Activated CD4-positive, alpha-beta memory T cell treated with anti-CD3 and anti-CD28 coated beads for 36 hours (primary cell): ENCODE measurements at regions of chr3 and their contacts with region 1.

Region 1: DNA sequence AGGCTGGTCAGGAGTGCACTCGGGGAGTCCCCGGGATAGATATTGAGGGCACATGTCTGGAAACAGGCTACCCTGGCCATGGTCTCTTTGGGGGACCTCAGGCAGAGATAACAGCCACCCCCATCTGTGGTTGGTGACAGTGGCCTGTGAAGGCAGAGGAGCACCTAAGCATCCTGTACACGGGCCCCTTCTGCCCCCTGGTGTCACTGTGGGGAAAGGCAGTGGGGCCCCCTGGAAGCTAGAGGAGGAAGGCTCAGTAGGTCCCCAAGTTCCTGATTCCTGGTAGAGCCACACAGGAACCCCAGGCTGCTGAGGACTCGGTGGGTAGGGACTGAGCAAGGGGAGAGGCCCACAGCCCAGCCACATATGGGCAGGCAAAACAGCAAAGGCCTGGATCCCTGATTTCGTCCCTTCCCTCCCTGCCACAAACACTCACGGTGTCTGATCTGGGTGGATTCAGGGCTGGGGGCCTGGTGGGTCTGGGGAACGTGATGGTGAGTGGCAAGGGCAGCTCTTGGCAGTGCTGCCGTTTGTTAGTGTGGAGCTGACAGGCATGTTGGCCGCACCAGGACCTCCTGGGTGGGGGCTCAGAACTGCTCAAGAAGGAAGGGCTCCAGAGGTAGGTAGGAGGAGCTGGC is 14.1 kb upstream of the CXCR6 start:
- DNase-seq: peak; percentile 76
- H3K4me3 Mint-ChIP-seq: no peak overlapping the region
- H3K27ac Mint-ChIP-seq: no peak overlapping the region
- H3K4me1 Mint-ChIP-seq: no peaks in the 10 kb centered on the region
- H3K27me3 Mint-ChIP-seq: no peaks in the 10 kb centered on the region

Region 2: DNA sequence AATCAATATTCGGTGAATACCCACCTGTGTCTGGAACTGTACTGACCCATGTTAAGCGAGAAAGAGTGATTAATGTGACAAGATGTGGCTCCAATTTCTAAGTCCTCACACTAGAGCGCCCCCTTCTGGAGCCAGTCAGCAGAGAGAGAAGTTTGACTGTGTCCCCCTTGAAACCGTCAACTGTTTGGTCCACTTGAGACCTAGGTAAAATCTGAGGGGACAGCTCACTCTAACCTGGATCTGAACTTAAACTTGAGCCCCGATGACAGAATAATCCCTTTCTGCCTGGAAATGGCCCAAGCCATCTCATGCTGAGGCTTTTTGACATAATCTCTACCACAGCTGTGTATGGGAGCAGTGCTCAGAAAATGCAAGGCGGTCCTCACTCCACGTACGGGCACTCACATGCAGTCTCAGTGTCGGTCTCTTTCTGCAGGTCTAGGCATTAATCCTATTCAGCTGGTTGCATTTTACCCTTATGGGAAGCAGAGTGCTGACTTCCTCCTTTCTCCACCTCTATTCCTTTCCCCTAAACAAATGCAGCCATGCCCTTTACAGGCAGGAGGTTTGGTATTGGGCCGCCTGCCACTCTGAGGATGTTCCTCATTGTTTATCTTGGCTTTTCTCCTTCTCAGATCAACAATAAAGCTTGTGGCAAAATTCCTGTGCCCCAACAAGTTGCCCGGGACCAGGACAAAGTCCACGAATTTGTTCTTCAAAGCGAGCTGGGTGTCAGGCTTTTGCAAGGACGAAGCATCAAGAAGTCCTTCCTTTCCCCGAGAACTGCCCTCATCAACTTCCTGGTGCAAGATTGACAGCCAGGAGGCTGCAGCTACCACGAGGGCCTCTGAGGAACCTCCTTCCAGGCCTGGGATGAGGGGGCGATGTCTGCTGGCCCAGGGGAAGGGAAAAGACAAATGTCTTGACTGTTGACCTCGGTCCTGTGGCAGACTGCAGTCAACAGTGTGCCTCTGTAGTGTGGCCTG is 382.2 kb before region 1 on chr3:
- CTCF ChIA-PET with region 1: no interaction called
- POLR2A ChIA-PET with region 1: no interaction called
- intact Hi-C with region 1: no loop called
- DNase-seq: peak; percentile 56
- H3K4me3 Mint-ChIP-seq: no peak overlapping the region
- H3K27ac Mint-ChIP-seq: no peak overlapping the region
- H3K4me1 Mint-ChIP-seq: peaks cover 3% of the 10 kb centered on the region
- H3K27me3 Mint-ChIP-seq: no peaks in the 10 kb centered on the region

Region 3: DNA sequence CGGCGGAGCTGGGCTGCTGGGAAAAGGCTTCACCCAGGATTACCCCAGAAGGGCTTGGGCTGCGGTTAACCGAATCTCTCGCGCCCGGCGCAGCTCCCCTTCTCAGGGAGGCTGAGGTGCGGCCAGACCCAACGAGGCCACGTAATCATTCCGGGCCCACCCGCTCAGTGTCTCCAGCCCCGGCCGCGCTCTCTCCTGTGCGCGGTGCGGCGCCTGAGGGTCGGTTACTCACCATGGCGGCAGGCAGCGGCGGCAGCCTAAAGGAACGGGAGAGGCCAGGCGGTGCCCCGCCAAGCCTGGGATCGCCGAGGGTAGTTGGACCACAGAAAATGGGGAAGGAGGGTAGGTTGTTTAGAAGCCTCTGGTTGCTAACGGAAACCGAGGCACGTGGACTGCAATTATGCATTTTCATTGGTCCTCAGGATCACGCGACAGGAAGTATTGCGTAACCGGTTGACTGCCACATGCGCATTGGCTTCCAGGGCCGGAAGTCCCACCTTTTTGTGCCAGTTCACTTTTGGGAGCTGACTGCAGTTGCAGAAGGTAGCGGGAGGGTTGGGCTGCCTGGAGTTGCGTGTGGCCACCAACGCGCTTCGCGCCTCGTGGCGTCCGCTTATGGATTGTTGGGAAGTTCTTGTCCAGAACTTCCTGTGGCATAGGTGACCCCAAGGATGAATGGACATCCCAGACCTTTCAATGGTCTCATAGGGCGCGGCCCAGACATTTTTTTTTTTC is 87.2 kb before region 1 on chr3 and contains the start of gene LZTFL1:
- CTCF ChIA-PET with region 1: interaction called, 14 read pairs
- POLR2A ChIA-PET with region 1: no interaction called
- intact Hi-C with region 1: no loop called
- DNase-seq: peak; percentile 95
- H3K4me3 Mint-ChIP-seq: peak within 1 kb of the TSS; percentile 88
- H3K27ac Mint-ChIP-seq: peak within 1 kb of the TSS; percentile 64
- H3K4me1 Mint-ChIP-seq: peaks cover 11% of the 10 kb centered on the region
- H3K27me3 Mint-ChIP-seq: peaks cover 2% of the 10 kb centered on the region
- total RNA-seq, gene LZTFL1: 3.9 to 6.4 TPM